IMR-90 (cell line): ENCODE measurements at regions of chr2 and their contacts with region 1.

Region 1: DNA sequence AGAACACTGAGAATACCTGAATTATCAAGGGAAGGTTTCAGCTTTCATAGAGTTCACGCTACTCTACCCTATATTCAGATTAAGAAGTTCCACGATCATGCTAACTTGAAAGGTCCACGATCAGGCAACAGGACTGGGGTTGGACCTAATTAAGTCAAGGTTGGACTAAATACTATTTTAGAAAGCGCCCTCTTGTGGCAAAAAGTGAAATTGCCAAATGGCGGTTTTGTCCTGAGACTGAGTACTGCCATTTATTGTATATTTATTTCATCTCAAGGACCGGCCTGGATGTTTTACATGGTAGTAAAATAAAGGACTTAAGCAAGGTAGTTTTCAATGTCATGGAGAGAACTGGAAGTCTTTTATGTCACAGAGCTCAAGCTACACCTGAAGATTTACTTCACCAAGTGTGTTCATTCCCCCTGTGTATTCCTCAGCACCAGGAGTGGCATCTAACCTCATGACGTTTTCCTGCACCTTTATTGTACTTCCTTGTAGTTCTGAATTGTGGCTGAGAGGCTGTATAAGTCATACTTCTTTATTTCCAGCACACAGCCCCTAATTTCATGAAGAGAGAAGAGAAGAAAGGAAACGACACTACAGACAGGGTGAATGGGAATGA is 56.8 kb downstream of the SRD5A2 start:
- DNase-seq: peak; percentile 52
- ATAC-seq: peak; percentile 78
- H3K4me3 ChIP-seq: no peak overlapping the region
- H3K27ac ChIP-seq: no peak overlapping the region
- H3K4me1 ChIP-seq: no peaks in the 10 kb centered on the region
- H3K27me3 ChIP-seq: peaks cover 10% of the 10 kb centered on the region
- CTCF ChIP-seq: peak; percentile 71
- POLR2A ChIP-seq: no peak
- RAD21 ChIP-seq: peak; percentile 57

Region 2: DNA sequence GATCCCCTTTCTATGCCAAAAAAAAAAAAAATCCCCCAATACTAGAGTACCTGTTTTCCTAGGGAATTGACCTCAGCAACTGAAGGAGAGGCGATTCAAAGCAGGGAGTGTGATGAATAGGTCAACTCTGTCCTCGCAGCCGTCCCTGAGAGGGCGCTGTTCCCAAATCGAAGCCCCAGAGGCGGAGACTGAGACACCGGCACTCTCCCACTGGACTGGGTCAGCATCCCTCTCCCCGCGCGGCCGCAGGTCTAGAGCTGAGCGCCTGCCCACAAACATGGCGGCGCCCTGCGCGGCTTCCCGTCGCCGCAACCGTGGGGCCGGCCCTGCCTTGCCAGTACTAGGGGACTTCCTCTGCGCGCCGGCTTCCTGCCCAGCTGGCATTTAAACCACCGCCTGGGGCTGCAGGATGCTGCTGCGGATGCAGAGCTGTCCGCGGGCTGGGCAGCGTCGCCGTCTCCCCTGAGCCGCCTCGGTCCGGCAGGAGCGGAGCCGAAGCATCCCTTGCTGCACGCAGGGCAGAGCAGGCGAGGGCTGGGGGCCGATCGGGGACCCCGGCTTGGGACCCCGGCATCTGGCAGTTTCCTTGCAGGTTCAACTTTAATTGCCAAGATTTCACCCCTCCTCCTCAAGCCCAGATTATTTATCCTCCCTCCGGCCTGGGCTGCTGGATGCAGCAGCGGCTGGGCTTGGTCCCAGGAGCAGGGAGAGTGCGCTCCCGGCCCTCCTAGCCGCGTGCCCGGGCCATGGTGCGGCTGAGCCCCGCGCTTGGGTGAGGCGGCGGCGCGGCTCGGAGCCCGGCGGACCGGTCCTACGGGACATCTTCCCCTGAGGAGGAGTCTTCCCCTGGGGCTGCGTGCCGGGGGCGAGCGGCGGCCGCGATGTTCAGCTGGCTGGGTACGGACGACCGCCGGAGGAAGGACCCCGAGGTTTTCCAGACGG is 290.0 kb before region 1 on chr2 and contains the start of gene EHD3:
- CTCF ChIA-PET with region 1: no interaction called
- POLR2A ChIA-PET with region 1: no interaction called
- dilution Hi-C with region 1: no loop called
- in situ Hi-C with region 1: no loop called
- intact Hi-C with region 1: loop called (anchors 5 kb)
- DNase-seq: peak; percentile 91
- ATAC-seq: peak; percentile 99
- H3K4me3 ChIP-seq: peak within 1 kb of the TSS; percentile 76
- H3K27ac ChIP-seq: peak within 1 kb of the TSS; percentile 56
- H3K4me1 ChIP-seq: peaks cover 8% of the 10 kb centered on the region; the same call in 1 of the 2 replicates
- H3K27me3 ChIP-seq: peaks cover 3% of the 10 kb centered on the region; the same call in 1 of the 2 replicates
- CTCF ChIP-seq: peak; percentile 72
- POLR2A ChIP-seq: peak; percentile 72
- RAD21 ChIP-seq: peak; percentile 66
- total RNA-seq, gene EHD3: 34.4 and 39.8 TPM in 2 replicates

Region 3: GRCh38 chr2:31568585-31569201 is 44.7 kb after region 1 on chr2:
- CTCF ChIA-PET with region 1: no interaction called
- POLR2A ChIA-PET with region 1: no interaction called
- dilution Hi-C with region 1: no loop called
- in situ Hi-C with region 1: no loop called
- intact Hi-C with region 1: no loop called
- DNase-seq: no peak
- ATAC-seq: no peak
- H3K4me3 ChIP-seq: no peak overlapping the region
- H3K27ac ChIP-seq: no peak overlapping the region
- H3K4me1 ChIP-seq: no peaks in the 10 kb centered on the region
- H3K27me3 ChIP-seq: no peaks in the 10 kb centered on the region
- CTCF ChIP-seq: no peak
- POLR2A ChIP-seq: no peak
- RAD21 ChIP-seq: no peak